Activated CD4-positive, alpha-beta memory T cell treated with anti-CD3 and anti-CD28 coated beads, Interleukin-2, amount 10 ng/mL, durations not matched to agents 7 days and 5 days (primary cell): ENCODE measurements at regions of chr10 and their contacts with region 1.

Region 1: DNA sequence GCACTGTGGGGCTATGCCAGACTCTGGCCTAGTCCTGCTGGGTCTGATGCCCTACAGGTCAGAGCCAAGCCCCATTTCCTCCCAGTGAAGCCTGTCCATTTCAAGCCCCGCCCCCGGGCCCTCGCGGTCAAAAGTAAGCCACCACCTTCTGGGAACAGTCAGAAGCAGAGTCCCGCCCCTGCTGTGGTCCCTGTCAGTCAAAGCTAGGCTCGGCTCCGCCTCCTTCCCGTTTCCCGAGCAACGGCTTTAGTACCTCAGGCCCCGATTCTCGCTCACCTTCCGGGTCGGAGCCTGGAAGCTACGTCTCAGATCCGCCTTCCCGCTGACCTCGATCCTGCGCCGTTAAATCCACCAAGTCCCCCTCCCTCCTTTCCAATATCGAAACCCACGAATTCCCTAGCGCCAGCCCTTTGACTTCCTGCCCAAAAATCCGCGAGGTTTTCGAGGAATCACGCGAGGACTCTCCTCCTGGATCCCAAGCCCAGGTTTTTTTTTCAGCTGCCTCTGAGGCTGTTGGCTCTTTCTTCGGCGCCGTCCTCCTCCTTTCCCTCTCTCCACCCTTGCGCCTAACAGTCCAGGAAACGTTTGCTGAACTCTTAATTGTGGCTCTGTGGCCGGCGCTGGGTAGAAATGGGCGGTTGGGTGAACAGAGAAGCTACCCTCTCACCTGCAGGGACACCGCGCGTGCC is 11.8 kb downstream of the SFXN3 start:
- DNase-seq: peak; percentile 93
- H3K4me3 Mint-ChIP-seq: peak overlapping the region; percentile 96
- H3K27ac Mint-ChIP-seq: peak overlapping the region; percentile 80
- H3K4me1 Mint-ChIP-seq: peaks cover 27% of the 10 kb centered on the region
- H3K27me3 Mint-ChIP-seq: peaks cover 27% of the 10 kb centered on the region

Region 2: GRCh38 chr10:101031128-101031795 is 11.5 kb before region 1 on chr10 and contains the starts of genes PDZD7 and SFXN3:
- CTCF ChIA-PET with region 1: interaction called, 515 read pairs
- POLR2A ChIA-PET with region 1: interaction called, 36 read pairs
- DNase-seq: peak; percentile 97
- H3K4me3 Mint-ChIP-seq: peak within 1 kb of the TSS; percentile 91
- H3K27ac Mint-ChIP-seq: peak within 1 kb of the TSS; percentile 96
- H3K4me1 Mint-ChIP-seq: peaks cover 27% of the 10 kb centered on the region
- H3K27me3 Mint-ChIP-seq: peaks cover 14% of the 10 kb centered on the region
- total RNA-seq, gene PDZD7: 1.1 to 1.9 TPM
- total RNA-seq, gene SFXN3: 91.4 to 95.0 TPM

Region 3: GRCh38 chr10:101060036-101060950 is 17.5 kb after region 1 on chr10:
- CTCF ChIA-PET with region 1: interaction called, 515 read pairs
- POLR2A ChIA-PET with region 1: interaction called, 44 read pairs
- DNase-seq: peak; percentile 91
- H3K4me3 Mint-ChIP-seq: peak overlapping the region; percentile 84
- H3K27ac Mint-ChIP-seq: peak overlapping the region; percentile 83
- H3K4me1 Mint-ChIP-seq: peaks cover 48% of the 10 kb centered on the region
- H3K27me3 Mint-ChIP-seq: peaks cover 23% of the 10 kb centered on the region

Region 4: GRCh38 chr10:101095542-101096213 is 52.9 kb after region 1 on chr10:
- CTCF ChIA-PET with region 1: interaction called, 11 read pairs
- POLR2A ChIA-PET with region 1: no interaction called
- DNase-seq: peak; percentile 78
- H3K4me3 Mint-ChIP-seq: no peak overlapping the region
- H3K27ac Mint-ChIP-seq: no peak overlapping the region
- H3K4me1 Mint-ChIP-seq: no peaks in the 10 kb centered on the region
- H3K27me3 Mint-ChIP-seq: peaks cover 21% of the 10 kb centered on the region

Region 5: DNA sequence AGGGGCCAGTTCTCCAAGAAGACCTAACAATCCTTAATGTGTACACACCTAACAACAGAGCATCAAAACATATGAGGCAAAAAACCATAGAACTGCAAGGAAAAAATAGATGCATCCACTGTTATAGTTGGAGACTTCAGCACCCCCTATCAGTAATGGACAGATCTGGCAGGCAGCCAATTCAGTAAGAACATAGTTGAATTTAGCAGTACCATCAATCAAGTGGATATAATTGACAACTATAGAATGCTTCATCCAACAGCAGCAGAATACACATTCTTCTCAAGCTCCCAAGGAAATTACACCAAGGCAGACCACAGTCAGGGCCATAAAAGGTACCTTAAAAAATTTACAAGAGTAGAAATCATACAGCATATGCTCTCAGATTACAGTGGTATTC is 503.1 kb after region 1 on chr10:
- CTCF ChIA-PET with region 1: no interaction called
- POLR2A ChIA-PET with region 1: no interaction called
- DNase-seq: no peak
- H3K4me3 Mint-ChIP-seq: no peak overlapping the region
- H3K27ac Mint-ChIP-seq: no peak overlapping the region
- H3K4me1 Mint-ChIP-seq: peaks cover 6% of the 10 kb centered on the region
- H3K27me3 Mint-ChIP-seq: no peaks in the 10 kb centered on the region